ENCODE measurements at regions of chr21 and their contacts with region 1.

Region 1: DNA sequence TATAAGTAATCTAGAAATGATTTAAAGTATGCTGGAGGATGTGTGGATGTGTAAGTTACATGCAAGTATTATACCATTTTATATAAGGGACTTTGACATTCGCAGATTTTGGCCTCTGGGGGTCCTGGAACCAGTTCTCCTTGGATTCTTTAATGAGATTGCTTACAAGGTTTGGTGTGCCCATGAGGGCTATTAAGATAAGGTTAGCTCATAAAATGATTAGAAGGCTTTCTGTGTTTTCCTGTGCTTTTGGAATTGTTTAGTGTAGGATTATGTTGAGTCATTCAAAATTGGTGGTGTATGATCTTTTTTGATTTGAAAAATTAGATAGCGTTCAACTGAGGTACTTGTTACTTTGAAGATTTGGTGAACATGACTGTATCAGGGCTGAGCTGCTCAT is 5.6 kb downstream of the USP25 start:
- DNase-seq: no peak
- ATAC-seq: no peak
- H3K4me3 ChIP-seq: peak overlapping the region; percentile 41
- H3K27ac ChIP-seq: peak overlapping the region; percentile 24
- H3K4me1 ChIP-seq: peaks cover 60% of the 10 kb centered on the region
- H3K27me3 ChIP-seq: no peaks in the 10 kb centered on the region
- CTCF ChIP-seq: no peak

Region 2: DNA sequence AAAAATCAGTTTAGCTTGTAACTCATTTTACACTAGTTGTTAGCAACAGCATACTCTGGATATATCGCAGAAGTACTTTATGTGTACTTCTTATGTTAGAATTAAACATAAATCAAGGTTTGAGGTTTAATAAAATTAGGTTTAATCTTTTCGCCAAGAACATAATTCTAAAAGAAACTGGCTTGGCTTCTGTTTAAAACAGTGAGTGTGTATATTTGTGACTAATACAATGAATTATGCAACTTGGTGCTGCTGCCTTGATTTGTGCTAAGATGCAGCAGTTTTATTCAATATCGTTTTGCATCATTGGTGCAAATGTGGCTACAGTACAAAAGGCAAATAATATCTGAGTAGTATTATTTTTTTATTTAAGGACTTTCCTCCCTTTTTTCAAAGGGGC is 39.2 kb after region 1 on chr21:
- intact Hi-C with region 1: loop called in 1 of 2 experiments (anchors 5 kb)
- DNase-seq: no peak
- ATAC-seq: no peak
- H3K4me3 ChIP-seq: no peak overlapping the region
- H3K27ac ChIP-seq: no peak overlapping the region
- H3K4me1 ChIP-seq: peaks cover 52% of the 10 kb centered on the region
- H3K27me3 ChIP-seq: no peaks in the 10 kb centered on the region
- CTCF ChIP-seq: no peak

Region 3: GRCh38 chr21:15797577-15798363 is 62.4 kb after region 1 on chr21:
- intact Hi-C with region 1: no loop called
- DNase-seq: no peak
- ATAC-seq: no peak
- H3K4me3 ChIP-seq: no peak overlapping the region
- H3K27ac ChIP-seq: peak overlapping the region; percentile 42
- H3K4me1 ChIP-seq: peaks cover 63% of the 10 kb centered on the region
- H3K27me3 ChIP-seq: no peaks in the 10 kb centered on the region
- CTCF ChIP-seq: no peak